ENCODE measurements at regions of chr3 and their contacts with region 1.

Region 1: DNA sequence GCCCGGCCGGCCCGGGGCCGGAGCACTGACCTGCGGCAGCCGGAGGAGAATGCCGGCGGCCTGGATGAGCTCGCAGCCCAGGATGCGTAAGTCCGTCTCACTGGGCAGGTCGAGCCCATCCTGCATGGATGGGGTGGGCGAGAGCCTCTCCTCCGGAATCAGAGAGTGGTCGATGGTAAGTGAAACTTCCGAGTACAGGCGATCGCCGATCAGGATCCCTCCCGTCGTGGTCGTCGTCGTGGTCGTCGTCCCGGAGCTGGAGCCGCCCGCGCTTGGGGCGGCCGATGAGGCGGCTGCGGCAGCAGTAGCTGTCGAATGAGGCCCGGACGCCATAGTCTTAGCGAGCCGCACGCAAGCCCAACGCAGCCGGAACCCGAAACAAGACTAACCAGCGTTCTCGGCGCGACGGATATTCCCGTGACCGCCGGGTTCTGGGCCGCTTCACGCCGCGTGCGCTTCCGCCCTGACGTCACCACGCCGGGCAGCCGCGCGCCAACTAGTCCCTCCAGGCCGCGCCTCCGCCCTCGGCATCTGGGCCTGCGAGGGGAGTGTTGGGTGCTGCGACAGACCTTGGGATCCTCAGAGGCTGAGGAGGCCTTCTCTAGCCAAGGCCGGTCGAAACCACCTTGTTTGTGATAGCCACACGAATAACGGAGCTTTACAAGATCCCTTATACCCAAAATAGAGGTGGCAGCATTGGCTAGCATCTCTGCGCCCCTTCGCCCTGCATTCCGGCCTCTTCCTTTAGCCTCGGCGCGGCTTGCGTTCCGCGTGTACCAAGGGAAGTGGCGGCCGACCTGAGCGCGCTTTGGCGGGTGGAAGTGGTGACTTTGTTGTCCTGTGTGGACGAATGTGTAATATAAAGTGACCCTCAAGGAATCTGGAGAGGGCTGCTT is at the start of gene CCNL1:
- DNase-seq: peak; percentile 92 to 99 (median 95)
- ATAC-seq: peak; percentile 70
- H3K4me3 ChIP-seq: peak within 1 kb of the TSS; percentile 79 to 84
- H3K4me3 Mint-ChIP-seq: peak within 1 kb of the TSS; percentile 96
- H3K27ac ChIP-seq: peak within 1 kb of the TSS; percentile 99 to 100
- H3K27ac Mint-ChIP-seq: peak within 1 kb of the TSS; percentile 100
- H3K4me1 ChIP-seq: peaks cover 50% of the 10 kb centered on the region
- H3K4me1 Mint-ChIP-seq: peaks cover 54% of the 10 kb centered on the region
- H3K27me3 ChIP-seq: no peaks in the 10 kb centered on the region
- H3K27me3 Mint-ChIP-seq: no peaks in the 10 kb centered on the region
- CTCF ChIP-seq: no peak
- total RNA-seq, gene CCNL1: 1,161 to 1,206 TPM

Region 2: DNA sequence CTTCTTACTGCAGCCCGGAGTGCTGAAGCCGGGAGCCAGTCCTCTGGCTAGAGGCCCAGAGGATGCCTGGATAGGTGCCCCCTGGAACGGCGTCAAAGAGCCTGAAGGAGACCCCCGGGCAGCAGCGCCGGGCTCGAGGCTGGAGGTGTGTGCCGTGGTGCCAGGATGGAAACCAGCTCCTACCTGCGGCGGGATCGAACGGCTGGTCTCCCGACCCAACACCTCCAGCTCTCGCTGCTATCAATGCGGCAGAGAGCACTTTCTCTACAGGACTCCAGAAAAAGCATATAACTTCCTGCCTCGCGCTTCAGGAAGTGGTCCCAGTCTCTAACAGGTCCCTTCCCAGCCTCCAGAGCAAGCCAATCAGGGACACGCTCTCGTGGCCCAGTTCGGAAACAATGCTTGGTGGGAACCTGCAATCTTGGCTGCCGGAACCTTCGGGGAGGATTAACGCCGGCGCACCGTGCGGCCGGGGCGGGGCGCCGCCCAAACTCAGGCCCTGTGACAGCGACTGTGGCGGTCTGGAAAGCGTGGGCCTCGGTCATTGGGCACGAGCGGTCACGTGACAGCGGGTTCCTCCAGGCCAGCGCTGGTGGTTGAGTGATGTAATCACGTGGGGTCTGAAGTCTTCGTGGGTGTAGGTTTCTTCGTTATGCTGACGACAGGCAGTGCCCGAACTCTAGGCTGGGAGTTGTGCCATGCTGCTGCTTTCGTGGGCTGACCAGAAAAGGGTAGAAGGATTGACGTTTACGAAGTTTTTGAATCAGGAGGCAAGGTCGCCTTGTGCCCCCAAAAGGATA is 1305.7 kb before region 1 on chr3 and contains the start of gene SLC33A1:
- CTCF ChIA-PET with region 1: no interaction called
- POLR2A ChIA-PET with region 1: interaction called, 5 read pairs
- intact Hi-C with region 1: loop called in 1 of 2 experiments (anchors 5 kb)
- DNase-seq: peak; percentile 96 to 100 (median 99)
- ATAC-seq: peak; percentile 89
- H3K4me3 ChIP-seq: peak within 1 kb of the TSS; percentile 85 to 92
- H3K4me3 Mint-ChIP-seq: peak within 1 kb of the TSS; percentile 98
- H3K27ac ChIP-seq: peak within 1 kb of the TSS; percentile 90 to 95
- H3K27ac Mint-ChIP-seq: peak within 1 kb of the TSS; percentile 99
- H3K4me1 ChIP-seq: peaks cover 33% of the 10 kb centered on the region
- H3K4me1 Mint-ChIP-seq: peaks cover 39% of the 10 kb centered on the region
- H3K27me3 ChIP-seq: no peaks in the 10 kb centered on the region
- H3K27me3 Mint-ChIP-seq: no peaks in the 10 kb centered on the region
- CTCF ChIP-seq: no peak
- total RNA-seq, gene SLC33A1: 12.6 to 12.9 TPM

Region 3: GRCh38 chr3:156233876-156234275 is 926.1 kb before region 1 on chr3:
- CTCF ChIA-PET with region 1: no interaction called
- POLR2A ChIA-PET with region 1: no interaction called
- intact Hi-C with region 1: no loop called
- DNase-seq: no peak
- ATAC-seq: no peak
- H3K4me3 ChIP-seq: no peak overlapping the region
- H3K4me3 Mint-ChIP-seq: no peak overlapping the region
- H3K27ac ChIP-seq: no peak overlapping the region
- H3K27ac Mint-ChIP-seq: no peak overlapping the region
- H3K4me1 ChIP-seq: no peaks in the 10 kb centered on the region
- H3K4me1 Mint-ChIP-seq: no peaks in the 10 kb centered on the region
- H3K27me3 ChIP-seq: no peaks in the 10 kb centered on the region
- H3K27me3 Mint-ChIP-seq: peaks cover 13% of the 10 kb centered on the region
- CTCF ChIP-seq: no peak

Region 4: DNA sequence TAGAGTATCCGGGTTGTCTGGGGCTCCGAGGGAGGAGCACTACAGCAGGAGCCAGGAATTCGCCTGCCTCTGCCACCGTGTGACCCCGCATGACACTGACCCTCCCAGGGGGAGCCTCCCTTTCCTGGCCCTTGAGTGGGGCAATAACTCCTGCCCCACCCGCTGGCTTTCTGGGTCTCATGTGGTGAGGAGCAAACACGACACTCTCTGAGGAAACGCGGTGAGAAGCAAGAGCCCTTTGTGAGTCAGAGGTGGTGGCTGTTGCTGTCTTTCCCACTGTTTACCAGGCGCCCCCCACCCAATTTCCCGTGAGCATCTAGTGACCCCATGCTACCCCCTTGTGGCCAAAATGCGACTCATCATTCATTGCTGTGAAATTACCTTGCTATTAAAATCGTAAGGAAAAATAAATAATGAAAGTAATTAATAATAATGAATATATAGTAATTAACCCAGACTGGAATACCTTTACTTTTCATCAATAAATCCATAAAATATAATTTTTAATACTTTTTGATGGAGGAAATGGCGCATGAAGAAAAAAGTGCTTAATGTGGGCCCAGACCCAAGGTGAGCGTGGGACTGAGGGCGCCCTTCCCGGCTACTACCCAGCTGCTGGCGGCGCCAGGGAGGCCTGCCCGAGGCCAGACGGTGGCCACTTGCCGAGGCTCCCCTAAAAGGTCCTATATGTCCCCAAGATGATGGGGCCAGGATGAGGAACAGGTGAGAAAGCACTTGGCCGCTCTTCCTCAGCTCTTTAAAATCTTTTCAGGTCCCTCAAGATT is 29.4 kb before region 1 on chr3:
- CTCF ChIA-PET with region 1: no interaction called
- POLR2A ChIA-PET with region 1: interaction called, 11 read pairs
- intact Hi-C with region 1: loop called in 1 of 2 experiments (anchors 2 kb)
- DNase-seq: peak; percentile 44 to 93 (median 85)
- ATAC-seq: peak; percentile 69
- H3K4me3 ChIP-seq: peak overlapping the region; percentile 14 to 24
- H3K4me3 Mint-ChIP-seq: peak overlapping the region; percentile 72
- H3K27ac ChIP-seq: peak overlapping the region; percentile 71 to 90
- H3K27ac Mint-ChIP-seq: peak overlapping the region; percentile 99
- H3K4me1 ChIP-seq: peaks cover 50% of the 10 kb centered on the region
- H3K4me1 Mint-ChIP-seq: peaks cover 71% of the 10 kb centered on the region
- H3K27me3 ChIP-seq: no peaks in the 10 kb centered on the region
- H3K27me3 Mint-ChIP-seq: no peaks in the 10 kb centered on the region
- CTCF ChIP-seq: peak; percentile 84

Region 5: GRCh38 chr3:157174649-157175498 is 14.9 kb after region 1 on chr3:
- CTCF ChIA-PET with region 1: interaction called, 33 read pairs
- POLR2A ChIA-PET with region 1: interaction called, 378 read pairs
- intact Hi-C with region 1: loop called (anchors 1 kb)
- DNase-seq: peak; percentile 94 to 100 (median 98)
- ATAC-seq: peak; percentile 91
- H3K4me3 ChIP-seq: peak overlapping the region; percentile 73 to 89
- H3K4me3 Mint-ChIP-seq: peak overlapping the region; percentile 92
- H3K27ac ChIP-seq: peak overlapping the region; percentile 96 to 98
- H3K27ac Mint-ChIP-seq: peak overlapping the region; percentile 99
- H3K4me1 ChIP-seq: peaks cover 25% of the 10 kb centered on the region
- H3K4me1 Mint-ChIP-seq: peaks cover 30% of the 10 kb centered on the region
- H3K27me3 ChIP-seq: no peaks in the 10 kb centered on the region
- H3K27me3 Mint-ChIP-seq: no peaks in the 10 kb centered on the region
- CTCF ChIP-seq: no peak

Region 6: GRCh38 chr3:157239082-157239704 is 79.2 kb after region 1 on chr3:
- CTCF ChIA-PET with region 1: no interaction called
- POLR2A ChIA-PET with region 1: interaction called, 3 read pairs
- intact Hi-C with region 1: loop called (anchors 1 to 2 kb)
- DNase-seq: peak; percentile 49 to 80 (median 72)
- ATAC-seq: peak; percentile 100
- H3K4me3 ChIP-seq: no peak overlapping the region
- H3K4me3 Mint-ChIP-seq: no peak overlapping the region
- H3K27ac ChIP-seq: no peak overlapping the region
- H3K27ac Mint-ChIP-seq: no peak overlapping the region
- H3K4me1 ChIP-seq: no peaks in the 10 kb centered on the region
- H3K4me1 Mint-ChIP-seq: peaks cover 4% of the 10 kb centered on the region
- H3K27me3 ChIP-seq: no peaks in the 10 kb centered on the region
- H3K27me3 Mint-ChIP-seq: no peaks in the 10 kb centered on the region
- CTCF ChIP-seq: peak; percentile 73